Endothelial cell of umbilical vein (primary cell): ENCODE measurements at regions of chr9 and their contacts with region 1.

Region 1: DNA sequence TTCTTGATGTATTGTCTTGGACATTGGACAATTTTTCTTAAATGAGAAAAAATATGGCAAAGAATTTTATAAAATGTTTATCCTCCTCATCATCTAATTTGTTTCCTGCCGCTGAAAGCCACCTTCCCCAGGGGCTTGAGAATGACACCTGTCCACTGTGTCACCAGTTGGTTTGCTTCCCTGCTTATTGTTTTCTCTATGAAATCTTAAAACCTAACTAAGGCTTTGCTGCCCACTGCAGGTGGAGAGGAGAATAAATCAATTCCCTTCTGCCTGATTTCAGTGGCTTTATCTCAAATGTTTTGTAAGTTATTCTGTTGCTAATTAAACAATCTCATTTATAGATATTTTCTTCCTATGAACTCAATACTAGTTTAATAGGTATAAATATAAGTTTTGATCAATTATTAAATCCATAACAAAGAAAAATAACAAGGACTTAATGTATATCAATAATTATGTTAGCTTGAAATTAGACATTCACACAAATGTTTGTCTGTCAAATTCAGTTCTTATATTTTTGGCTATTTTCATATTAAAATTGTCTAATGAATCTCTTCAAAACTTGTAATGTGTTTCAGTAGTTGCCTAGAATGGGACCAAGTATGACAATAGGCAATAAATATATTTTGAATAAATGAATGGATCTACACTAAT is 822.5 kb downstream of the PTPRD start:
- DNase-seq: peak; percentile 69
- H3K4me3 ChIP-seq: no peak overlapping the region
- H3K27ac ChIP-seq: no peak overlapping the region
- H3K4me1 ChIP-seq: no peaks in the 10 kb centered on the region
- H3K27me3 ChIP-seq: peaks cover 0 to 2% of the 10 kb centered on the region in 2 experiments
- CTCF ChIP-seq: peak; percentile 63 to 76
- POLR2A ChIP-seq: no peak

Region 2: DNA sequence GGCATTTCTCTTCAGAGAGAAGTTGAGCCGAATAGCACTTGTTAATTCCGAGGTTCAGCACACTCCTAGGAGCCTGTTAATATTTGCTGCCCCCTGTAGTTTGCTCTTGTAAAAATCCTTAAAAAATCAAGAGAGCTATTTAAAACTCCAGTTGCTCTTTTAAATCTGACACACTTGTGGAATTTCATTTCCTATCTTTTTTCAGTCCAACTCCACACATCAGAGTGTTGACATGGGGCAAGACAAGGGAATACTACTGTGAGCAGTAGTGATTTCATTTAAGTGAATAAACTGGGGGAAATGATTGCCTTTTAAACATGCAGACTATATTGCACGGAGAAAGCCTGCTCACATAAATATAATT is 894.5 kb before region 1 on chr9:
- CTCF ChIA-PET with region 1: interaction called, 11 read pairs
- POLR2A ChIA-PET with region 1: no interaction called
- dilution Hi-C with region 1: no loop called
- intact Hi-C with region 1: no loop called
- DNase-seq: peak; percentile 47
- H3K4me3 ChIP-seq: no peak overlapping the region
- H3K27ac ChIP-seq: no peak overlapping the region
- H3K4me1 ChIP-seq: no peaks in the 10 kb centered on the region
- H3K27me3 ChIP-seq: no peaks in the 10 kb centered on the region
- CTCF ChIP-seq: peak; percentile 14 to 26
- POLR2A ChIP-seq: no peak

Region 3: GRCh38 chr9:9598723-9599122 is 191.6 kb before region 1 on chr9:
- CTCF ChIA-PET with region 1: interaction called, 806 read pairs
- POLR2A ChIA-PET with region 1: no interaction called
- dilution Hi-C with region 1: no loop called
- intact Hi-C with region 1: no loop called
- DNase-seq: no peak
- H3K4me3 ChIP-seq: no peak overlapping the region
- H3K27ac ChIP-seq: no peak overlapping the region
- H3K4me1 ChIP-seq: no peaks in the 10 kb centered on the region
- H3K27me3 ChIP-seq: no peaks in the 10 kb centered on the region
- CTCF ChIP-seq: no peak
- POLR2A ChIP-seq: no peak

Region 4: DNA sequence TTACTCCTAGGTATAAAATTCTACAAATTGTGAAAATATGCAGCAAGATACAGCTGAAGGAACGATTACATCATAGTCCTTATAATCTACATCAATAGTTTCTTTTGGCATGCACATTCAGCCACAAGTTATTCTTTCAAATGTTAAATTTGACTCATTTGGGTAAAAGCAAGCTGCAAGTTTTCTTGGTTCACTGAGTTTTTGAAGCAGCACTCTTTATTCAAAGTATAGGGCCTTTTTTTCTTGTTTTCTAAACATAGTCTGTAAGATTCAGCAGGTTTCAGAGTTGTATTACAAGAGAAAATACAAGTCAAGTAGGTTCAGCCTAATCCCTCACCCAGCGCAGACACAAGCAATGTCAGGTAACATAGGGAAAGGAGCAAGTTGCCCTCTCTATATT is 159.1 kb before region 1 on chr9:
- CTCF ChIA-PET with region 1: interaction called, 13 read pairs
- POLR2A ChIA-PET with region 1: no interaction called
- dilution Hi-C with region 1: no loop called
- intact Hi-C with region 1: no loop called
- DNase-seq: no peak
- H3K4me3 ChIP-seq: no peak overlapping the region
- H3K27ac ChIP-seq: no peak overlapping the region
- H3K4me1 ChIP-seq: no peaks in the 10 kb centered on the region
- H3K27me3 ChIP-seq: no peaks in the 10 kb centered on the region
- CTCF ChIP-seq: no peak
- POLR2A ChIP-seq: no peak

Region 5: GRCh38 chr9:9730174-9730573 is 60.2 kb before region 1 on chr9:
- CTCF ChIA-PET with region 1: no interaction called
- POLR2A ChIA-PET with region 1: no interaction called
- dilution Hi-C with region 1: no loop called
- intact Hi-C with region 1: no loop called
- DNase-seq: no peak
- H3K4me3 ChIP-seq: no peak overlapping the region
- H3K27ac ChIP-seq: no peak overlapping the region
- H3K4me1 ChIP-seq: no peaks in the 10 kb centered on the region
- H3K27me3 ChIP-seq: no peaks in the 10 kb centered on the region
- CTCF ChIP-seq: no peak
- POLR2A ChIP-seq: no peak

Region 6: GRCh38 chr9:9764821-9765220 is 25.5 kb before region 1 on chr9:
- CTCF ChIA-PET with region 1: interaction called, 10 read pairs
- POLR2A ChIA-PET with region 1: no interaction called
- dilution Hi-C with region 1: no loop called
- intact Hi-C with region 1: no loop called
- DNase-seq: no peak
- H3K4me3 ChIP-seq: no peak overlapping the region
- H3K27ac ChIP-seq: no peak overlapping the region
- H3K4me1 ChIP-seq: no peaks in the 10 kb centered on the region
- H3K27me3 ChIP-seq: no peaks in the 10 kb centered on the region
- CTCF ChIP-seq: no peak
- POLR2A ChIP-seq: no peak

Region 7: GRCh38 chr9:9942764-9943424 is 152.6 kb after region 1 on chr9:
- CTCF ChIA-PET with region 1: interaction called, 131 read pairs
- POLR2A ChIA-PET with region 1: no interaction called
- dilution Hi-C with region 1: no loop called
- intact Hi-C with region 1: loop called (anchors 2 kb)
- DNase-seq: peak; percentile 87
- H3K4me3 ChIP-seq: no peak overlapping the region
- H3K27ac ChIP-seq: no peak overlapping the region
- H3K4me1 ChIP-seq: no peaks in the 10 kb centered on the region
- H3K27me3 ChIP-seq: no peaks in the 10 kb centered on the region
- CTCF ChIP-seq: peak; percentile 87 to 90
- POLR2A ChIP-seq: no peak